ENCODE measurements at regions of chr6 and their contacts with region 1.

Region 1: GRCh38 chr6:134517145-134517658 is 199.3 kb upstream of the SGK1 start:
- DNase-seq: no peak
- ATAC-seq: no peak
- H3K4me3 ChIP-seq: no peak overlapping the region
- H3K4me3 Mint-ChIP-seq: no peak overlapping the region
- H3K27ac ChIP-seq: no peak overlapping the region
- H3K27ac Mint-ChIP-seq: peak overlapping the region; percentile 57
- H3K4me1 ChIP-seq: peaks cover 13% of the 10 kb centered on the region
- H3K4me1 Mint-ChIP-seq: peaks cover 32% of the 10 kb centered on the region
- H3K27me3 ChIP-seq: no peaks in the 10 kb centered on the region
- H3K27me3 Mint-ChIP-seq: no peaks in the 10 kb centered on the region
- CTCF ChIP-seq: no peak

Region 2: DNA sequence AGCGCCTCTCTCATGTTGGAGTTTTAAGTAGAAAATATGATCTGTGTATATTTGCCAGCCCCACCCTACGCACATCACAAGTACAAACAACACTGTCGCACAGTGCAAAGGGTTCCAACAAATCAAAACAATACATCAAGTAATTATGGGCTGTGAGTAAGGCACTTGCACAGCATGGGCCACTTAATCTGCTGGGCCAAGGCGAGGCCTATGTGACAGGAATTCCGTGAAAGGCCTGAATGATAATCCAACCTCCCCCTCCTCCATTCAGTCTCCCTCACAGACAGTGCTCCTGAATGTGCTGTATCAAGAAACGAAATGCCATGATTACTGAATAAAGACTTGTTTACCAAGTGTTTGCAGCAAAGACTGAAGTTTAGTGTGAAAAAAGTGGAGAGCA is 334.7 kb before region 1 on chr6:
- CTCF ChIA-PET with region 1: interaction called, 6 read pairs
- POLR2A ChIA-PET with region 1: no interaction called
- intact Hi-C with region 1: loop called in 1 of 2 experiments (anchors 5 kb)
- DNase-seq: no peak
- ATAC-seq: no peak
- H3K4me3 ChIP-seq: no peak overlapping the region
- H3K4me3 Mint-ChIP-seq: no peak overlapping the region
- H3K27ac ChIP-seq: no peak overlapping the region
- H3K27ac Mint-ChIP-seq: no peak overlapping the region
- H3K4me1 ChIP-seq: peaks cover 12% of the 10 kb centered on the region
- H3K4me1 Mint-ChIP-seq: peaks cover 31% of the 10 kb centered on the region
- H3K27me3 ChIP-seq: no peaks in the 10 kb centered on the region
- H3K27me3 Mint-ChIP-seq: no peaks in the 10 kb centered on the region
- CTCF ChIP-seq: no peak

Region 3: DNA sequence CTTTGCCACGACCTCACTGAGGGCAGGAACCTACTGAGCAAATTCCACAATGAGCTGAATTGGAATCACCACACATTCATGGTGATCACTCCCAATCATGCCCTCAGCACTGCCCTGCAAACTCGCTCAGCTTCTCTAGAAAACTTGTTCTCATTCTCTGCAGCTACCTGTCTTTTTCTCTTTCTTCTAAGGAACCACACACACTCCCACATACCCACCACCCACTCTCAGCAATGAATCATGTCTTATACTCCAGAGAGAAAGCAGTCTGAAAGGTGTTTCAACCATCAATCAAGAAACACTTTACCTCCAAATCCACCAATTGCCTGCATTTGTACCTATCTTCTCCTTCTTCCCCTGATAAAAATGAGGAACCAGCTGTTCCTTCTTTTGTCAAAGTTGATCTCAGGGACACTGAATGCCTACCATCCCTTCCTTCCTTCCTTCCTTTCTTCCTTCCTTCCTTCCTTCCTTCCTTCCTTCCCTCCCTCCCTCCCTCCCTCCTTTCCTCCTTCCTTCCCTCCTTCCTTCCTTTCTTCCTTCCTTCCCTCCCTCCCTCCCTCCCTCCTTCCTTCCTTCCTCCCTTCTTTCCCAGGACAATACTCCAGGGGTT is 114.7 kb before region 1 on chr6:
- CTCF ChIA-PET with region 1: no interaction called
- POLR2A ChIA-PET with region 1: no interaction called
- intact Hi-C with region 1: no loop called
- DNase-seq: no peak
- ATAC-seq: no peak
- H3K4me3 ChIP-seq: no peak overlapping the region
- H3K4me3 Mint-ChIP-seq: no peak overlapping the region
- H3K27ac ChIP-seq: no peak overlapping the region
- H3K27ac Mint-ChIP-seq: no peak overlapping the region
- H3K4me1 ChIP-seq: no peaks in the 10 kb centered on the region
- H3K4me1 Mint-ChIP-seq: peaks cover 6% of the 10 kb centered on the region
- H3K27me3 ChIP-seq: no peaks in the 10 kb centered on the region
- H3K27me3 Mint-ChIP-seq: no peaks in the 10 kb centered on the region
- CTCF ChIP-seq: no peak

Region 4: GRCh38 chr6:134491477-134491876 is 25.7 kb before region 1 on chr6:
- CTCF ChIA-PET with region 1: no interaction called
- POLR2A ChIA-PET with region 1: no interaction called
- intact Hi-C with region 1: no loop called
- DNase-seq: no peak
- ATAC-seq: no peak
- H3K4me3 ChIP-seq: no peak overlapping the region
- H3K4me3 Mint-ChIP-seq: no peak overlapping the region
- H3K27ac ChIP-seq: no peak overlapping the region
- H3K27ac Mint-ChIP-seq: no peak overlapping the region
- H3K4me1 ChIP-seq: no peaks in the 10 kb centered on the region
- H3K4me1 Mint-ChIP-seq: no peaks in the 10 kb centered on the region
- H3K27me3 ChIP-seq: no peaks in the 10 kb centered on the region
- H3K27me3 Mint-ChIP-seq: no peaks in the 10 kb centered on the region
- CTCF ChIP-seq: no peak

Region 5: GRCh38 chr6:134529921-134530320 is 12.7 kb after region 1 on chr6:
- CTCF ChIA-PET with region 1: no interaction called
- POLR2A ChIA-PET with region 1: interaction called, 4 read pairs
- intact Hi-C with region 1: loop called in 1 of 2 experiments (anchors 1 kb)
- DNase-seq: peak in 4 of 14 experiments; percentile 41 to 76 (median 62)
- ATAC-seq: peak; percentile 87
- H3K4me3 ChIP-seq: no peak overlapping the region
- H3K4me3 Mint-ChIP-seq: no peak overlapping the region
- H3K27ac ChIP-seq: no peak overlapping the region
- H3K27ac Mint-ChIP-seq: peak overlapping the region; percentile 71
- H3K4me1 ChIP-seq: peaks cover 10% of the 10 kb centered on the region
- H3K4me1 Mint-ChIP-seq: peaks cover 32% of the 10 kb centered on the region
- H3K27me3 ChIP-seq: no peaks in the 10 kb centered on the region
- H3K27me3 Mint-ChIP-seq: no peaks in the 10 kb centered on the region
- CTCF ChIP-seq: no peak